ENCODE measurements at regions of chr16 and their contacts with region 1.

Region 1: DNA sequence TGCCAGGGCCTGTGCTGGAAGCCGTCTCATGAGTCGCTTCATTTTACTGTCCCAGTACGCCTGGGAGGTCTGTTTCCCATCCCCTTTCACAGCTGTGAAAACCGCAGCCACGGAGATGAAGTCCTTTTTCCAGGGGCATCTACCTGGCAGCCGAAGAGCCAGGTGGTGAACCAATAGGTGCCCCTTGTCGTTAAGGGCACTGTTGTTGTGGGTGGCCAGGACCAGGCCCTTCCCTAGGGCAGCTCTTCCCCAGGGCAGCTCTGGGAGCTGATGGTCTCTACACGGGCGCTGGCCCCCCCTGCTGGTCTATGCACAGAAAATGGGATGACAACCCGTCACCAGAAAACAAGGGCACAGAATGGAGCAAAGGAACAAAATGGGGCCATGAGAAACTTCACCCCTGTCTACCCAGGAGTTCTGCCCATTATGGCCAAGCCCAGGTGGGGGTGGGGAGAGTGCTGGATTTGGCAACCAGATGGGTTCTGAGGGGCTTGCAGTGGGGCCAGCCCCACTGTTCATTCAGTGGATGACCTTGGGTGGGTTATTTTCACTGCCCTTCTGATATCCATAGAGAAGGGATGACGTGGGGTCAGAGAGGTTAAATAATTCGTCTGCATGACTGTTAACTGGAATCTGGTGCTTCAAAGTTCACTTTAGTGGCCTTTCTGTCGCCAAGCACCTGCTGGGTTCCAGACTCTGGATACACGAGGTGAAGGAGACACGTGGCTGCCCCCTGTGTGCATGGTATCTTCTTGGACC is 11.5 kb downstream of the RMI2 start:
- DNase-seq: no peak
- ATAC-seq: peak; percentile 92
- H3K4me3 ChIP-seq: no peak overlapping the region
- H3K27ac ChIP-seq: no peak overlapping the region
- H3K4me1 ChIP-seq: no peaks in the 10 kb centered on the region; the same call in 1 of the 2 replicates
- H3K27me3 ChIP-seq: no peaks in the 10 kb centered on the region
- CTCF ChIP-seq: peak; percentile 88

Region 2: GRCh38 chr16:10964039-10964890 is 392.5 kb before region 1 on chr16:
- CTCF ChIA-PET with region 1: interaction called, 4 read pairs
- POLR2A ChIA-PET with region 1: no interaction called
- in situ Hi-C with region 1: no loop called
- intact Hi-C with region 1: loop called (anchors 10 kb)
- DNase-seq: no peak
- ATAC-seq: peak; percentile 95
- H3K4me3 ChIP-seq: peak overlapping the region in 1 of 2 experiments; percentile 5; a peak in 1 of 4 replicates
- H3K27ac ChIP-seq: no peak overlapping the region
- H3K4me1 ChIP-seq: no peaks in the 10 kb centered on the region
- H3K27me3 ChIP-seq: no peaks in the 10 kb centered on the region
- CTCF ChIP-seq: peak; percentile 97

Region 3: DNA sequence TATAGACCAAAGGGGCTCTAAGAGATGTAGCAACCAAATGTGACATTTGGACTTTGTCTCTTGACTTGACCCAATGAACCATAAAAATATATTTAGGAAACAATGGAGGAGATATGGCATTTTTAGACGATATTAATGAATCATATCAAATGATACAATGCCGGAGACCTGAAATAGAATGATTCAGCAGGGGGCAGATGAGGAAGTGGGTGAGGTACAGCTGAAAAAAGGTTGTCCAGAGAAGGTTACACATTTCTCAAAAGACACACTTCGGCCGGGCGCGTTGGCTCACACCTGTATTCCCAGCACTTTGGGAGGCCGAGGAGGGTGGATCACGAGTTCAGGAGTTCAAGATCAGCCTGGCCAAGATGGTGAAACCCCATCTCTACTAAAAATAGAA is 295.0 kb after region 1 on chr16:
- CTCF ChIA-PET with region 1: no interaction called
- POLR2A ChIA-PET with region 1: interaction called, 11 read pairs
- in situ Hi-C with region 1: no loop called
- intact Hi-C with region 1: no loop called
- DNase-seq: no peak
- ATAC-seq: no peak
- H3K4me3 ChIP-seq: no peak overlapping the region
- H3K27ac ChIP-seq: no peak overlapping the region
- H3K4me1 ChIP-seq: no peaks in the 10 kb centered on the region
- H3K27me3 ChIP-seq: no peaks in the 10 kb centered on the region
- CTCF ChIP-seq: no peak

Measured in Panc1 (cell line).